IMR-90 (cell line): ENCODE measurements at regions of chr15 and their contacts with region 1.

Region 1: DNA sequence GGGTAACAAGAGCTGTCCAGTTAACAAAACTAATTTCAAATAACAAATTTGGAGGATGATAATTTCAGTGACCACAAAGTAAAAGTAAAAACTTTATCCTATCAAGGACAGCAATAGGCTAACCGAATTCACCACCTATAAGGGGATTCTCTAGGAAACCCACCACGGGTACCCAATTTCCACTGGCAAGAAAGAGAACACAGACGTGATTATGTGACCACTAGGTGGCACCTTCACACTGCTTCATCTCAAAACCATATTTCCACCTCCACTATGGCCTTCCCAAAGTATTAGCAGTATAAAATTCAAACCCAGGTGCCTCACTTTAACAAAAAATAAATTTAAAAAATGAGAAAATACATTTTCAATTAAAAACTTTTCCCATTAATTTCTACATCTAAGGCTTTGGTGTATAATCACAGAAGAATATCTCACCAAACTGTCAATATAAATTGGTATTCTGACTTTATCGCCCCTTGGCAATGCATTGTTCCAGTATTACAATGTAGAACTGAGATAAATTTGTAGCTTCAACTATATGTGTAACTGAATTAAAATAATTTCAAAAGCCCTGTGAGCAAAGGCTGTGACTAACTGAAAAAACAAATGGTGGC is 96.5 kb downstream of the FSIP1 start:
- DNase-seq: peak; percentile 70
- ATAC-seq: peak; percentile 85
- H3K4me3 ChIP-seq: no peak overlapping the region
- H3K27ac ChIP-seq: no peak overlapping the region
- H3K4me1 ChIP-seq: peaks cover 2% of the 10 kb centered on the region
- H3K27me3 ChIP-seq: no peaks in the 10 kb centered on the region
- CTCF ChIP-seq: peak; percentile 72
- POLR2A ChIP-seq: no peak
- RAD21 ChIP-seq: peak; percentile 90

Region 2: GRCh38 chr15:39642011-39642640 is 44.0 kb before region 1 on chr15:
- CTCF ChIA-PET with region 1: no interaction called
- POLR2A ChIA-PET with region 1: no interaction called
- dilution Hi-C with region 1: no loop called
- in situ Hi-C with region 1: no loop called
- intact Hi-C with region 1: no loop called
- DNase-seq: peak; percentile 76
- ATAC-seq: peak; percentile 86
- H3K4me3 ChIP-seq: no peak overlapping the region
- H3K27ac ChIP-seq: no peak overlapping the region; the same call in 1 of the 2 replicates
- H3K4me1 ChIP-seq: peaks cover 6% of the 10 kb centered on the region; the same call in 1 of the 2 replicates
- H3K27me3 ChIP-seq: no peaks in the 10 kb centered on the region; the same call in 1 of the 2 replicates
- CTCF ChIP-seq: no peak
- POLR2A ChIP-seq: no peak
- RAD21 ChIP-seq: no peak

Region 3: DNA sequence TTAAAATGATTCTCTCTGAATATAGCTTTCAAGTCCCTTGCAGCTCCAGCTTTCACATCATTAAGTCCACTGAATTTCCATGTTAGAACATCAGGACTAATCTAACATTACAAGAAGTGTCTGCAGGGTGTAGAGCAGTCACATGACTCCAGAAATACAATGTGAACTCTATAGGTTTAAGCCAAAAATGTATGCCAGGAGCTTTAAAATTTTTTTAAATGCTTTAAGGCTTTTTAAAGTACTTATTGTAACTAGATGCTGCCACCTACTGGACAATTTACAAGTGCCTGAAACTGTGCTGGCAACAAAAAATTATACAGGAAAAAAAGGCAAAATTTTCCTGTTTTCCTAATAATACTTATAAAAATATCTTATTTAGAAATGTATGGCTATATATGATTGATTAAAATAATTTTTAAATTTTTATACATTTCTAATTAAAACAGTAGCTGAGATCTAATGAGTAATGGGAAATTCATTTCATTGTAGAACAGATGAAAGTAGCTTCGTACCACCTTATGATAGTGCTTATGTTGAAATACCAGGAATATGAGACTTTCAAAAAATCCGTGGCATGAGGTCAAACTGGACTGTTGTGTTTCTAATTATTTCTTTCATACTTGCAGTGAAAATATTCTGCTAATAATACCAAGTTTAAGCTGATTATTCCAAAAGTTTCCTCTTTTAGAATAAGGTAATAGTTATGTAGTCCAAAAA is 70.9 kb after region 1 on chr15:
- CTCF ChIA-PET with region 1: interaction called, 28 read pairs
- POLR2A ChIA-PET with region 1: no interaction called
- dilution Hi-C with region 1: no loop called
- in situ Hi-C with region 1: loop called (anchors 5 kb)
- intact Hi-C with region 1: loop called (anchors 1 kb)
- DNase-seq: peak; percentile 83
- ATAC-seq: peak; percentile 35; the same call in 1 of the 2 replicates
- H3K4me3 ChIP-seq: no peak overlapping the region
- H3K27ac ChIP-seq: no peak overlapping the region
- H3K4me1 ChIP-seq: no peaks in the 10 kb centered on the region
- H3K27me3 ChIP-seq: no peaks in the 10 kb centered on the region
- CTCF ChIP-seq: peak; percentile 80
- POLR2A ChIP-seq: no peak
- RAD21 ChIP-seq: peak; percentile 76

Region 4: GRCh38 chr15:39770748-39771689 is 84.9 kb after region 1 on chr15:
- CTCF ChIA-PET with region 1: no interaction called
- POLR2A ChIA-PET with region 1: no interaction called
- dilution Hi-C with region 1: no loop called
- in situ Hi-C with region 1: no loop called
- intact Hi-C with region 1: loop called (anchors 1 kb)
- DNase-seq: peak; percentile 92
- ATAC-seq: peak; percentile 98
- H3K4me3 ChIP-seq: peak overlapping the region; percentile 21; the same call in 1 of the 2 replicates
- H3K27ac ChIP-seq: peak overlapping the region; percentile 80
- H3K4me1 ChIP-seq: peaks cover 10% of the 10 kb centered on the region
- H3K27me3 ChIP-seq: no peaks in the 10 kb centered on the region
- CTCF ChIP-seq: no peak
- POLR2A ChIP-seq: no peak
- RAD21 ChIP-seq: no peak

Region 5: DNA sequence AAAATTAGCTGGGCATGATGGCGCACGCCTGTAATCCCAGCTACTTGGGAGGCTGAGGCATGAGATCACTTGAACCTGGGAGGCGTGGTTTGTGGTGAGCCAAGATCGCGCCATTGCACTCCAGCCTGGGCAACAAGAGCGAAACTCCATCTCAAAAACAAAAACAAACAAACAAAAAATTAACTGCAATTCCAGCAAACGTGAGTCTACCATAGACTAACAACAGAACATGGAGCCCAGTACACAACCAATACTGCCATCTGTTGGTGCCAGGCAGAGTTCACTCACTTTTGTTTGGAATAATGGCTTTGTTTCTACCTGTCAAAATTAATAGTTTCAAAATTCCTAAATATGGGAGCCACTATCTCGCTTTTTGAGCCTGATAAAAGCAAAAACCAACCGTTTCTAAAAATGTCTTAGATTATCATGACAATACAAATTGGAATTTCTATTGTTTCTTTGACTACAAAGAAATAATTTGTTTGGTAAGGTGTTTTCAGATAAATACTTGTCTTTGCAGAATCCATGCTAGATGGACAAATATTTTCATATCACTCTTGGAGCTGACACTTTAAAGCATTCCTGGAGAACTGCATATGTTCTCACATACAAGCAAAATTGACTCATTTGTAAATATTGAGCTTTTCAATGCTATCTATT is 188.9 kb after region 1 on chr15:
- CTCF ChIA-PET with region 1: interaction called, 3 read pairs
- POLR2A ChIA-PET with region 1: no interaction called
- dilution Hi-C with region 1: no loop called
- in situ Hi-C with region 1: no loop called
- intact Hi-C with region 1: loop called (anchors 2 kb)
- DNase-seq: no peak
- ATAC-seq: no peak
- H3K4me3 ChIP-seq: no peak overlapping the region
- H3K27ac ChIP-seq: no peak overlapping the region
- H3K4me1 ChIP-seq: peaks cover 16% of the 10 kb centered on the region
- H3K27me3 ChIP-seq: no peaks in the 10 kb centered on the region
- CTCF ChIP-seq: peak; percentile 51
- POLR2A ChIP-seq: no peak
- RAD21 ChIP-seq: peak; percentile 52

Region 6: DNA sequence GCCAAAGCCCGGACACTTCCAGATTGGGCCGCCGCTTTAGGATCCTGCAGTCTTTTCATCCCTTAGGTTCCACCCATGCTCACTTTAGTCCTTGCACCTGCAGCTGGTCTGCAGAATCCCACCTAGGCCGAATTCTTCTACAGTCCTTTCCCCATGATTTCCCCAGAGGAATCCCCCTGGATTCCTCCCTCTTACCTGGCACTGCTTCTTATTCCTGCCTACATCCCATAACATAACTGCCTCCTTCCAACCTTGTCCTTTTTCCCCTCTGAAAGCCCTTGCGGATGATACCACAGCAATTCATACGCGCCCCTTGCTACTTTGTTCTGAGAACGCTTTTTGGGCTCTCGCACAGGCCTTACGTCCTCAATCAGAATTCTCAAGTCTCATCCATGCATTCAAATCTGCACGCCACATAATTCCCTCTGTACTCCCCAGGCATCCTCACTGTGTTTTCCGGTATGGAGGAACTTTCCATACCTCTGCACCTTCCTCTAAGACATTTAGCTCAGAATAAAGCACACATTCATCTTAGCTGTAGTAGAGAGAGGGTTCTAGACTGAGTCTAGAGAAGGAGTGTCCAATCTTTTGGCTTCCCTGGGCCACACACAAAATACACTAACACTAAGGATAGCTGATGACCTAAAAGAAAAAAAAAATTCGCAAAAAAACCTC is 248.4 kb after region 1 on chr15:
- CTCF ChIA-PET with region 1: no interaction called
- POLR2A ChIA-PET with region 1: no interaction called
- dilution Hi-C with region 1: no loop called
- in situ Hi-C with region 1: no loop called
- intact Hi-C with region 1: loop called (anchors 10 kb)
- DNase-seq: no peak
- ATAC-seq: no peak
- H3K4me3 ChIP-seq: peak overlapping the region; percentile 80
- H3K27ac ChIP-seq: peak overlapping the region; percentile 92
- H3K4me1 ChIP-seq: peaks cover 17% of the 10 kb centered on the region
- H3K27me3 ChIP-seq: no peaks in the 10 kb centered on the region
- CTCF ChIP-seq: no peak
- POLR2A ChIP-seq: no peak
- RAD21 ChIP-seq: no peak